Heart left ventricle (tissue), 16 donors: ENCODE measurements at regions of chr3 and their contacts with region 1.

Region 1: DNA sequence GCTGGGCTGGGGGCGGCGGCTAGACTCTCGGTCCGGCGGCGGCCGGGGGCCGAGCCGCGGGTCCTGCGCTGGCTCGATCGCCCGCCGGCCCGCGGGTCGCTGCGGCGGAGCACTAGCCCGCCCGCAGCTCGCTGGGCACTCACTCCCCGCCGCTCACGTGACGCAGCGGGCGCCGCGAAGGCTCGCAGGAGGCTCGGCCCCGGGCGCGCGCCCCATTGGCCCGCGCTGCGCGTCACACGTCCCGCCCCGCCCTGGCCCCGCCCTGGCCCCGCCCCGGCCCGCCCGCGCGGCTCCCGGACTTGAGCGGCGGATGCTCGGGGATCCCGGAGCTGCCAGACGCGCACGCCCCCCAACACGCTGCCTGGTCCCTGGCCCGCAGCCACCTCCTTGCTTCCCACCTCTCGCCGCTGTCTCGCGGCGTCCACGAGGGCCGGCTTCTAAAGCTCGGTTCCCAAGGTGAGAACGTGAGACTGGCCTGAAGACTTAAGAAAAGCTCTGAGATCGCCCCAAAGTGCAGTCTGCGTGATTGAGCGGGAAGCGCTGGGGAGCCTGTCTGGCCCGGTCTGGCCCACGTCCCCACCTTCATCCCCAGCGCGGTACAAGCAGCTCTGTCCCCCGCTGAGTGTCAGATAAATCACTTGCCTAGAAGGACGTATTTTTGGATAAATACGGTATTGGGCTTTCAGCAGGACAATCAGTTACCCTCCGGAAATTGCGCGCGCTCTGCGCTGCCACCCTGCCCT is at the start of gene KLF15:
- DNase-seq: peak; percentile 86 to 93 (median 90)
- ATAC-seq: peak in 3 of 4 donors; percentile 63 to 77 (median 76)
- H3K4me3 ChIP-seq: peak within 1 kb of the TSS; percentile 53 to 95 (median 70)
- H3K27ac ChIP-seq: peak within 1 kb of the TSS; percentile 84 to 100 (median 95)
- H3K4me1 ChIP-seq: peaks cover 0 to 53% (median 30%) of the 10 kb centered on the region in 12 donors
- H3K27me3 ChIP-seq: peaks cover 0 to 40% (median 0%) of the 10 kb centered on the region in 9 donors
- CTCF ChIP-seq: no peak
- POLR2A ChIP-seq: peak; percentile 36 to 80
- total RNA-seq, gene KLF15: 10.5 to 85.8 (median 31.0) TPM

Region 2: DNA sequence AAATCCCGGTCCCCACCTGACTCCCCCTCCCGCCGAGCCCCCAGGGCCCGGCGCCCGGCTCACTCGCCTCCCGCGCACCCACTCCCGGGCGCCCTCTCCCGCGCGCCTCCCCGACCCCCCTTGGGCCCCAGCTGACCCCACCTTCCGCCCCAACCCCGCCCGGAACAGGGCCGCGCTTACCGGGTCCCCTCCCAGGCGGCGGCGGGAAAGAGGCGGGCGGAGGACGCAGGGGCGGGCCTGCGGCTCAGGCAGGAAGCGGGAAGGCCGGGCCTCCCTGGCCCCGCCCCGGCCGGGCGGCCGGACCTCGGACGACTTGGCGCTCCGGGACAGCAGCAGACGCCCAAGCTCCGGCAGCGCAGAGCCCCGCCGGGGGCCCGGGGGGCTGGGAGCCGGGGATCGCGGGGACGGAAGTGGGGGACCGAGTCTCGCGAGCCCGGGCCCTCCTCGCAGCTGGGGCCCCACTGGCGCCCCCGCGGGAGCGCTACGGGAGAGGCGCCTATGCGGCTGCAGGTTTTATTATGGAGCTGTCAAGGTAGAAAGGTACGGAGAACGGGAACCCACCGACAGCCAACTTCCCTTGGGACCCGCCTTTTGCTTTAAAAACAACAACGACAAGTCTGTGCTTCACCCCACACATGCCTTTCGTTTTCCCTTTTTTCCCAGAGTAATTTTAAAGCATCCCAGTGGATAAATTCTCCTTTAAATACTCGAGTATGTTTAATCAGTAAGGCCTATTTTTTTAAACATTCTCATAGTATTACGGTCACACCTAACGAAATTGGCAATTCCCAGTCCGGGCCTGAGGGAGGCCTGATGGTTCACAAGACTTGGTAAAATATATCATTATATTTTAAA is 273.3 kb before region 1 on chr3 and contains the start of gene SLC41A3:
- intact Hi-C with region 1: loop called in 1 of 10 experiments (anchors 5 kb)
- DNase-seq: peak; percentile 92 to 95 (median 94)
- ATAC-seq: peak; percentile 97 to 99 (median 98)
- H3K4me3 ChIP-seq: peak within 1 kb of the TSS; percentile 49 to 97 (median 81)
- H3K27ac ChIP-seq: peak within 1 kb of the TSS; percentile 45 to 97 (median 89)
- H3K4me1 ChIP-seq: peaks cover 0 to 25% (median 11%) of the 10 kb centered on the region in 12 donors
- H3K27me3 ChIP-seq: no peaks in the 10 kb centered on the region
- CTCF ChIP-seq: peak; percentile 9 to 57 (median 34)
- POLR2A ChIP-seq: peak in 1 of 2 donors; percentile 78
- total RNA-seq, gene SLC41A3: 33.3 to 57.6 (median 46.4) TPM

Region 3: GRCh38 chr3:126267226-126267975 is 90.1 kb before region 1 on chr3:
- intact Hi-C with region 1: loop called in 7 of 10 experiments (anchors 1 to 5 kb)
- DNase-seq: peak; percentile 59 to 85 (median 79)
- ATAC-seq: peak; percentile 55 to 74 (median 70)
- H3K4me3 ChIP-seq: peak overlapping the region in 11 of 12 donors; percentile 0 to 47 (median 43)
- H3K27ac ChIP-seq: peak overlapping the region; percentile 52 to 93 (median 89)
- H3K4me1 ChIP-seq: peaks cover 0 to 54% (median 23%) of the 10 kb centered on the region in 12 donors
- H3K27me3 ChIP-seq: peaks cover 0 to 23% (median 0%) of the 10 kb centered on the region in 9 donors
- CTCF ChIP-seq: peak in 4 of 12 donors; percentile 22 to 44 (median 34)
- POLR2A ChIP-seq: peak in 1 of 2 donors; percentile 55

Region 4: DNA sequence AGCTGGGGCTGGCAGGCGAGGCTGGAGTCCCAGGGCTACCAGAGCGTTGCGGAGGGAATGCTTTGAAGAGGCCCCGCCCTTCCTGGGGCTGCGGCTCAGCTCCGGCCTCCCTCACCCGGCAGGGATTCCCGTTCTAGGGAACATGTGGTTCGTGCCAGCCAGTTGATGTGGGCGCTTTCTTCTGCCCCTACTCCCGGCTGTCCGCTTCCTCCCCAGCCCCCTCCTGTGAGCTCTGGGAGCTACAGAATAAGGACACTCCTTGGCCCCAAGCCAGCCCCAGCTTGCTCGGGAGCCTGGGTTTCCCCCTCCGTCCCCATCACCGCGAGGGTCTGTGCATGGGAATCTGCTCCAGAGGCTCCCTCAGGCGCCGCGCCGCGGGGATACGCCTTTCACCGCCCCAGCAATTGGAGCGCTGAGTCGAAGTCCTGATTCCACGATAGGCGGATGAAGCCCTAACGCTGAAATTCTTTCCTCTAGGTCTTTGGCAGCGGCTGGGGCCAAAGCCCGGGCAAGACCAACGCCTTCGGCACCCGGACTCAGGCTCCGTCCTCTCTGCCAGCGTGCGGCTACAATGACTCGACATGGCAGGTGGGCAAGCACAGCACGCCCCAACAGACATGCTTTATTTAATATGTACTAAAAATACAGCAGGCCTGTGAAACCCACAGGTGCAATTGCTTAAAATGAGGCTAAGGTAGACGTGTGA is 69.8 kb before region 1 on chr3:
- intact Hi-C with region 1: loop called in 2 of 10 experiments (anchors 5 kb)
- DNase-seq: peak; percentile 64 to 87 (median 69)
- ATAC-seq: peak; percentile 92 to 95 (median 94)
- H3K4me3 ChIP-seq: peak overlapping the region; percentile 6 to 61 (median 46)
- H3K27ac ChIP-seq: peak overlapping the region; percentile 71 to 88 (median 82)
- H3K4me1 ChIP-seq: peaks cover 0 to 24% (median 6%) of the 10 kb centered on the region in 12 donors
- H3K27me3 ChIP-seq: peaks cover 0 to 34% (median 0%) of the 10 kb centered on the region in 9 donors
- CTCF ChIP-seq: no peak
- POLR2A ChIP-seq: peak in 1 of 2 donors; percentile 38

Region 5: DNA sequence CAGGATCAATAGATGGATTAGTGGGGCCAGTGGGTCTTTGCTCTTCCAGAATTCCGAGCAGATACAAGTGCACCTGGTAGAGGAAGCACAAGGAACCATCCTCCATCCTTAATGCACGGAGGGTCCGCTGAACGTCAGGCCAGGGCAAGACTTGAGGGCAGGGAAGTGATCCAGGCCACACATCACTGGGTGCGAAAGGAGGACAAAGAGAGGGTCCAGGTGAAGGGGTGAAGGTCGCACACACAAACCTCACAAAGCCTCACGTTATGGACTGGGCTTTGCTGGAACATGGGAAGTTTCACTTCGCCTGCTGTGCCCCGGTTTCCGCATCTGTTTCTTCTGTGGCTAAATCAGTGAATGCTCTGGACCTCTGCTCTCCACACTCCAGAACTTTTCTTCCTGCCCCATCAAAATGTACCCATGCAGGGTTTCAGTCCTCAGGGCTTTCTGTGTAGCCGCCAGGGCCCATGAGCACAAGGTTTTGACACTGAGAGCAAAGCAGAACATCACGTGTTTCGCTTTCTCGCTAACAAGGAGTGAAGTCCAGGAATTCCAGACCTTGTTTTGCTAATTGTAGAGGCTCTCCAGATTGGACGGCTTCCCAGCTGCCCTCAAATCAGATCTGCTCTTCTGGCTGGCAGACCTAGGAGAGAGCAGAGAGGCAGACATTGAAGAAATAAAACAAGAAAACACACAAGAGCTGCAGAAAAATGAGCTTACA is 56.5 kb before region 1 on chr3:
- intact Hi-C with region 1: loop called in 1 of 10 experiments (anchors 5 kb)
- DNase-seq: peak in 4 of 5 donors; percentile 59 to 82 (median 64)
- ATAC-seq: peak; percentile 90 to 97 (median 92)
- H3K4me3 ChIP-seq: no peak overlapping the region
- H3K27ac ChIP-seq: peak overlapping the region; percentile 55 to 79 (median 70)
- H3K4me1 ChIP-seq: peaks cover 0 to 13% (median 0%) of the 10 kb centered on the region in 12 donors
- H3K27me3 ChIP-seq: no peaks in the 10 kb centered on the region
- CTCF ChIP-seq: no peak
- POLR2A ChIP-seq: no peak

Region 6: DNA sequence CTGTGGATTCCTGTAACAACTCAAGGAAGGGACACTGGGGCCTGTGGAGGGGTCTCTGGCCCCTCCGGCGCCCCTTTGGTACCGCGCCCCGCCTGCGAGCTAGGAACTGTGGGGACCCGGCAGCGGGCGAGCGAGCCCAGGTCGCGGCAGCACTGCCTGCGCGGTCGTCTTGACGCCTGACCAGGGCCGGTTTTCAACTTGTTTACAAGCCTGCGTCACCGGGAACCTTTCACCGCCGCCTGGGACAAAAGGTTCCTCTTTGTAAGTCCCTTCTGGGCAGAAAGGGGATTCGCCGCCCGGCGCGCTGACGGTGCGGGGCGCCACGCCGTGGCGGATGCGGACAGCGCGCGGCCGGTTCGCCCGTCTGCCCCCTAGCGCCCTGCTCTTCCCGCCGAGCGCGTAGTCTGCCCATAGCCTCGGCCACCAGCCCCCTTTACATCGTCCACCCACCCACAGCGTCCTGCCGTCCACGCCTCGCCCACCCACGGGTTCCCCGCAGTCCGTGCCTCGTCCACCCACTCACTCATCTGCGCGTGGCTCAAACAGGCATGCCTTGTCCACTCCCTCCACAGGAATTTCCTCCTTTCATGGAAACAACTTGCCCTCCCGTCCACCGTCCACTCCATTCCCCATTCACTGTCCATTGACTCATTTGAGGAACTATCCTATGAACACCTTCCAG is 31.8 kb after region 1 on chr3:
- intact Hi-C with region 1: loop called in 2 of 10 experiments (anchors 1 to 2 kb)
- DNase-seq: peak; percentile 83 to 96 (median 93)
- ATAC-seq: peak; percentile 88 to 98 (median 96)
- H3K4me3 ChIP-seq: peak overlapping the region in 11 of 12 donors; percentile 4 to 63 (median 53)
- H3K27ac ChIP-seq: peak overlapping the region; percentile 69 to 88 (median 82)
- H3K4me1 ChIP-seq: peaks cover 0 to 10% (median 5%) of the 10 kb centered on the region in 12 donors
- H3K27me3 ChIP-seq: peaks cover 0 to 12% (median 0%) of the 10 kb centered on the region in 9 donors
- CTCF ChIP-seq: peak; percentile 78 to 100 (median 98)
- POLR2A ChIP-seq: peak in 1 of 2 donors; percentile 55

Region 7: GRCh38 chr3:126475413-126476114 is 118.1 kb after region 1 on chr3 and contains the start of gene ZXDC:
- intact Hi-C with region 1: loop called in 1 of 10 experiments (anchors 10 kb)
- DNase-seq: peak; percentile 95 to 98 (median 96)
- ATAC-seq: peak; percentile 83 to 89 (median 87)
- H3K4me3 ChIP-seq: peak within 1 kb of the TSS; percentile 63 to 90 (median 80)
- H3K27ac ChIP-seq: peak within 1 kb of the TSS; percentile 85 to 97 (median 92)
- H3K4me1 ChIP-seq: peaks cover 0 to 54% (median 42%) of the 10 kb centered on the region in 12 donors
- H3K27me3 ChIP-seq: no peaks in the 10 kb centered on the region
- CTCF ChIP-seq: peak in 9 of 12 donors; percentile 18 to 70 (median 51)
- POLR2A ChIP-seq: peak in 1 of 2 donors; percentile 50
- total RNA-seq, gene ZXDC: 15.4 to 40.3 (median 20.2) TPM